Naive thymus-derived CD4-positive, alpha-beta T cell (primary cell): ENCODE measurements at regions of chr14 and their contacts with region 1.

Region 1: GRCh38 chr14:104708606-104709268 is 15.3 kb upstream of the ADSS1 start:
- DNase-seq: peak; percentile 51 to 81 (median 66)
- ATAC-seq: peak; percentile 90
- H3K4me3 ChIP-seq: no peak overlapping the region
- H3K4me3 Mint-ChIP-seq: no peak overlapping the region
- H3K27ac ChIP-seq: no peak overlapping the region
- H3K27ac Mint-ChIP-seq: peak overlapping the region in 5 of 9 donors; percentile 32 to 71 (median 52)
- H3K4me1 ChIP-seq: no peaks in the 10 kb centered on the region
- H3K4me1 Mint-ChIP-seq: peaks cover 0 to 5% (median 4%) of the 10 kb centered on the region in 7 donors
- H3K27me3 ChIP-seq: no peaks in the 10 kb centered on the region
- H3K27me3 Mint-ChIP-seq: no peaks in the 10 kb centered on the region

Region 2: DNA sequence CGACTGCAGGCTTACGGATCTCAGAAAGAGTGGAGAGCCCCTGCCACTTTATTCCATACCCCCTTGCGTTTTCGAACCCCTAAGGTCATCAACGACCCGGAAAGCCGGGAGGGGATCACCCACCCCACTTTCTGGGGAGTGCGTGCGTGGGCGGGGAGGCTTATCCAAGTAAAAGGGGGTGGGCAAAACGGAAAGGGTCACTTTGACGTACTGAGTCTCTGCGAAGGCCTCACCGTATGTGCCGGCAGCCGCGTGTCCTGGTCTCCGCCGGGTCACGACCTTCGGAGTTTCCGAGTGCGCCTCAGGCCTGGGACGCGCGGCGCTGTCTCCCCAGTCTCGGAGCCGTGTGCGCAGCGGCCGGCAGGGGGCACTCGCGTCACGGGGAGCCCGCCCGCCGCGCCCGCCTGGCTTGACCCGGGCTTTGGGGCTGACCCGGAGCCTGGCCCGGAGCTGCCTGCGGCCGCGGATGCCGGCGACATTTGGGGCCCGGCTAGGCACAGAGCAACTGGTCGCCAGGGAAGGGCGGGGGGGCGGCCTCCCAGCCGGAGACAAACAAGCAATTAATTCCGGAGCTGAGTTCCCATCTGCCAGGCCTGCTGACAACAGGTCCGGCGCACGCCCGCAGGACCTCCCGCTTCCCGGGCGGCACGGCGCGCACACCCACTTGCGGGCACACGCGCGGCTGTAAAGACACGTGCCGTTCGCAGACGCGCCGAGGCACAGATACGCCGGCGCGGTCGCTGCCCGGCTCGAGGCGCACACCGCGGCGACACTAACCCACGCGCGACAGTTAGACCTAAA is 571.2 kb before region 1 on chr14:
- CTCF ChIA-PET with region 1: no interaction called
- POLR2A ChIA-PET with region 1: no interaction called
- intact Hi-C with region 1: loop called in 1 of 2 experiments (anchors 5 kb)
- DNase-seq: peak; percentile 8 to 77 (median 48)
- ATAC-seq: peak; percentile 72
- H3K4me3 ChIP-seq: no peak overlapping the region
- H3K4me3 Mint-ChIP-seq: peak overlapping the region; percentile 25 to 81 (median 63)
- H3K27ac ChIP-seq: no peak overlapping the region
- H3K27ac Mint-ChIP-seq: no peak overlapping the region
- H3K4me1 ChIP-seq: no peaks in the 10 kb centered on the region
- H3K4me1 Mint-ChIP-seq: peaks cover 0 to 10% (median 5%) of the 10 kb centered on the region in 7 donors
- H3K27me3 ChIP-seq: peaks cover 0 to 12% of the 10 kb centered on the region in 2 donors
- H3K27me3 Mint-ChIP-seq: peaks cover 20 to 41% (median 29%) of the 10 kb centered on the region in 5 donors

Region 3: GRCh38 chr14:104650057-104650981 is 58.4 kb before region 1 on chr14:
- CTCF ChIA-PET with region 1: interaction called, 5 read pairs
- POLR2A ChIA-PET with region 1: no interaction called
- intact Hi-C with region 1: loop called (anchors 1 kb)
- DNase-seq: peak; percentile 35 to 74 (median 53)
- ATAC-seq: peak; percentile 82
- H3K4me3 ChIP-seq: peak overlapping the region; percentile 51
- H3K4me3 Mint-ChIP-seq: peak overlapping the region in 8 of 10 donors; percentile 36 to 64 (median 55)
- H3K27ac ChIP-seq: no peak overlapping the region
- H3K27ac Mint-ChIP-seq: no peak overlapping the region
- H3K4me1 ChIP-seq: peaks cover 3 to 9% of the 10 kb centered on the region in 2 donors
- H3K4me1 Mint-ChIP-seq: peaks cover 0 to 3% (median 0%) of the 10 kb centered on the region in 7 donors
- H3K27me3 ChIP-seq: no peaks in the 10 kb centered on the region
- H3K27me3 Mint-ChIP-seq: peaks cover 0 to 18% (median 0%) of the 10 kb centered on the region in 5 donors

Region 4: DNA sequence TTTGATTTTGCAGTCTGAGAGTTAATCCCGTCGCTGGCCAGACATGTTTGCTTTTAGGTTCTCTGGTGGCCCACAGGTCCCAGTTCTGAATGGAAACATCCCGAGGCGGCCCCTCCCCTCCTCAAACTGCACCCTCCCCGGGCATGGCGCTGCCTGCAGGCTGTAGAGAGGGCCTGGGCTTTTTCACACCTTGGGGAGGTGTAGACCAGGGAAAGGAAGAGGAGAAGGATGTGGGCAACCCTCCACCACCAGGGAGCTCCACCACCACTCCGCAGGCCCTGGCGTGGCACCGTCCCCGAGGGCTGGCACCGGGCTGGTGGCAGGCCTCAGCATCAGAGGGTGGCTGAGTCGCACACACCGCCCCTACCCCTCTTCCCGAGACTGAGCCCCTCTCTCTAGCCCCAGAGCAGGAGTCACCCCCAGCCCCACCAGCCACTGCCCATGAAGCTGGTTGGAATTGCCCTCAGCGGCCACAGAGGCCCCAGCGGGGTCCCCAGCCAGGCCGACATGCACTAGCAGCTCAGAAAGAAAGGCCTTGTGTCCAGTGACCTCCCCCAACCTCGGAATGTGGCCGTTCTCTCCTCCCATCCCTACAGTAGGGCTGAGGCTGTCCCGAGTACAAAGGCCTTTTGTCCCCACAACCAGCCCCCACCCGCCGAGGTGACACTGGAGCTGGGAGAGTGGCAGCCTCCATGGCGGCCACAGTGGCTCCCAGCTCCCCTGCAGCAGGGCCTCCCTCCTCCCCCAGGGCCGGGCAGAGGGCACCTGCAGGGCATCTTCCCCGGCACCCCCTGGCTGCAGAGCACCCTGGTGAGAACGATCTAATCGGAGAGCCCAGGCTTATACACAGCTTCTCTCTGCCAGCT is 42.8 kb before region 1 on chr14:
- CTCF ChIA-PET with region 1: interaction called, 14 read pairs
- POLR2A ChIA-PET with region 1: no interaction called
- intact Hi-C with region 1: loop called (anchors 1 to 5 kb)
- DNase-seq: peak in 7 of 9 donors; percentile 33 to 65 (median 55)
- ATAC-seq: peak; percentile 90
- H3K4me3 ChIP-seq: no peak overlapping the region
- H3K4me3 Mint-ChIP-seq: peak overlapping the region in 9 of 10 donors; percentile 7 to 80 (median 39)
- H3K27ac ChIP-seq: peak overlapping the region; percentile 17
- H3K27ac Mint-ChIP-seq: peak overlapping the region in 8 of 9 donors; percentile 60 to 90 (median 78)
- H3K4me1 ChIP-seq: peaks cover 12 to 14% of the 10 kb centered on the region in 2 donors
- H3K4me1 Mint-ChIP-seq: peaks cover 13 to 32% (median 24%) of the 10 kb centered on the region in 7 donors
- H3K27me3 ChIP-seq: peaks cover 0 to 5% of the 10 kb centered on the region in 2 donors
- H3K27me3 Mint-ChIP-seq: peaks cover 0 to 25% (median 8%) of the 10 kb centered on the region in 5 donors

Region 5: GRCh38 chr14:104689109-104689880 is 19.4 kb before region 1 on chr14 and contains the start of gene INF2:
- CTCF ChIA-PET with region 1: interaction called, 9 read pairs
- POLR2A ChIA-PET with region 1: interaction called, 5 read pairs
- intact Hi-C with region 1: loop called (anchors 1 to 2 kb)
- DNase-seq: peak in 6 of 9 donors; percentile 36 to 64 (median 40)
- ATAC-seq: peak; percentile 79
- H3K4me3 ChIP-seq: peak within 1 kb of the TSS; percentile 70
- H3K4me3 Mint-ChIP-seq: peak within 1 kb of the TSS; percentile 58 to 91 (median 79)
- H3K27ac ChIP-seq: peak within 1 kb of the TSS; percentile 77
- H3K27ac Mint-ChIP-seq: peak within 1 kb of the TSS in 5 of 9 donors; percentile 8 to 90 (median 65)
- H3K4me1 ChIP-seq: peaks cover 10 to 62% of the 10 kb centered on the region in 2 donors
- H3K4me1 Mint-ChIP-seq: peaks cover 14 to 64% (median 48%) of the 10 kb centered on the region in 7 donors
- H3K27me3 ChIP-seq: no peaks in the 10 kb centered on the region
- H3K27me3 Mint-ChIP-seq: no peaks in the 10 kb centered on the region
- total RNA-seq, gene INF2: 65.0 to 140 (median 95.5) TPM

Region 6: GRCh38 chr14:104694991-104695659 is 13.6 kb before region 1 on chr14:
- CTCF ChIA-PET with region 1: no interaction called
- POLR2A ChIA-PET with region 1: interaction called, 4 read pairs
- intact Hi-C with region 1: loop called (anchors 2 kb)
- DNase-seq: peak in 8 of 9 donors; percentile 46 to 65 (median 59)
- ATAC-seq: peak; percentile 71
- H3K4me3 ChIP-seq: peak overlapping the region; percentile 47
- H3K4me3 Mint-ChIP-seq: peak overlapping the region; percentile 61 to 80 (median 76)
- H3K27ac ChIP-seq: peak overlapping the region; percentile 70
- H3K27ac Mint-ChIP-seq: peak overlapping the region; percentile 89 to 97 (median 93)
- H3K4me1 ChIP-seq: peaks cover 21 to 50% of the 10 kb centered on the region in 2 donors
- H3K4me1 Mint-ChIP-seq: peaks cover 8 to 49% (median 34%) of the 10 kb centered on the region in 7 donors
- H3K27me3 ChIP-seq: no peaks in the 10 kb centered on the region
- H3K27me3 Mint-ChIP-seq: no peaks in the 10 kb centered on the region